PC-9 (cell line): ENCODE measurements at regions of chr7 and their contacts with region 1.

Region 1: GRCh38 chr7:28853834-28854749 is 104.0 kb downstream of the TRIL start:
- DNase-seq: peak; percentile 48 to 79
- H3K4me3 ChIP-seq: peak overlapping the region; percentile 53
- H3K27ac ChIP-seq: no peak overlapping the region
- H3K4me1 ChIP-seq: peaks cover 16% of the 10 kb centered on the region
- H3K27me3 ChIP-seq: no peaks in the 10 kb centered on the region
- CTCF ChIP-seq: peak; percentile 87

Region 2: GRCh38 chr7:28298870-28299518 is 555.1 kb before region 1 on chr7:
- CTCF ChIA-PET with region 1: no interaction called
- POLR2A ChIA-PET with region 1: no interaction called
- intact Hi-C with region 1: loop called (anchors 1 kb)
- DNase-seq: peak; percentile 27 to 52
- H3K4me3 ChIP-seq: no peak overlapping the region
- H3K27ac ChIP-seq: no peak overlapping the region
- H3K4me1 ChIP-seq: peaks cover 14% of the 10 kb centered on the region
- H3K27me3 ChIP-seq: no peaks in the 10 kb centered on the region
- CTCF ChIP-seq: peak; percentile 75

Region 3: GRCh38 chr7:28389504-28390395 is 464.3 kb before region 1 on chr7:
- CTCF ChIA-PET with region 1: no interaction called
- POLR2A ChIA-PET with region 1: no interaction called
- intact Hi-C with region 1: loop called (anchors 1 kb)
- DNase-seq: peak in 1 of 2 experiments; percentile 75
- H3K4me3 ChIP-seq: peak overlapping the region; percentile 53
- H3K27ac ChIP-seq: no peak overlapping the region
- H3K4me1 ChIP-seq: peaks cover 11% of the 10 kb centered on the region
- H3K27me3 ChIP-seq: no peaks in the 10 kb centered on the region
- CTCF ChIP-seq: peak; percentile 97

Region 4: DNA sequence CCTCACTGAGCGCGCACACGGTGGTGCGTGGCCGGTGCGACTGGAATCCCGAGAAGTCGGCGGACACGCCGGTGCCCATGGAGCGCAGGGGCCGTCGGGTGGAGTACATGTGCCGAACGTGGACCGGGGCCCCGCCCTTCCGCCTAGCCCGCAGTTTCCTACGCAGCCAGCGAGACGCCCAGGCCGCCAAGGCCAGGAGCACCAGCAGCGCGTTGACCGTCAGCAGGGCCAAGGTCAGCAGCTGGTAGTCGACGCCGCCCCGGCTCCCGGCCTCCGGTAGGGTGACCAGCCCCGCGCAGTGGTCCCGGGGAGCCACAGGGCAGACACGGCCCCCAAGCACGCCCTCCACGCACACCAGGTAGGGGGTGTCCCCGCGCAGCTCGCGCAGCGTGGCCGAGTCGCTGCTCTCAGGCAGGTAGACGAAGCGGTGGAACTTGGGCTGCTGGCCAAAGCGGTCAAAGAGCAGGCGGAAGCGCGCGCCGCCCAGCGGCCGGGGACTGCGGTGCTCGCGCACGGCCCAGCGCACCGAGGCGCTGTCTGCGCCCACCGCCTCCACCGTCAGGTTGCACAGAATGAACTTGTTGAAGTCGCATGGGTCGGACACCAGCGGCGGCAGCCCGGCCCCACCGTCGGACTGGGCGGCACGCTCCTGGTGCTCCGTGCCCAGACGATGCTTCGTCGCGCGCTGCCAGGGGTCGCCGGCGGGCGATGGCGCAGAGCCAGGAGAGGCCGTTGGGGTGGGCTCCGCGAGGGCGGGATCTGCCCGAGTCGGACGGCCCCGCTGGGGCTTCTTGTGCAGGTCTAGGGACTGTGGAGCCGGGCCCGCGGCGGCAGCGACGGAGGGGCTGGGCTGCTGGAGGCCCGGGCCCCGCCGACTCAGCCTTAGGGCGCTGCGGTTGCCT is 101.9 kb after region 1 on chr7:
- CTCF ChIA-PET with region 1: no interaction called
- POLR2A ChIA-PET with region 1: no interaction called
- intact Hi-C with region 1: no loop called
- DNase-seq: no peak
- H3K4me3 ChIP-seq: peak overlapping the region; percentile 43; the same call in 1 of the 2 replicates
- H3K27ac ChIP-seq: no peak overlapping the region
- H3K4me1 ChIP-seq: peaks cover 13% of the 10 kb centered on the region
- H3K27me3 ChIP-seq: 0 out of 2 replicates have a peak, but pooled peaks cover 3% of the 10 kb centered on the region
- CTCF ChIP-seq: peak; percentile 50